Astrocyte of the cerebellum (primary cell): ENCODE measurements at regions of chr1 and their contacts with region 1.

Region 1: GRCh38 chr1:203428981-203429599 is 46.5 kb upstream of the PRELP start:
- DNase-seq: no peak
- H3K4me3 ChIP-seq: no peak overlapping the region
- CTCF ChIP-seq: no peak

Region 2: GRCh38 chr1:203368624-203369451 is 60.3 kb before region 1 on chr1:
- in situ Hi-C with region 1: loop called (anchors 5 kb)
- DNase-seq: no peak
- H3K4me3 ChIP-seq: no peak overlapping the region
- CTCF ChIP-seq: no peak

Region 3: DNA sequence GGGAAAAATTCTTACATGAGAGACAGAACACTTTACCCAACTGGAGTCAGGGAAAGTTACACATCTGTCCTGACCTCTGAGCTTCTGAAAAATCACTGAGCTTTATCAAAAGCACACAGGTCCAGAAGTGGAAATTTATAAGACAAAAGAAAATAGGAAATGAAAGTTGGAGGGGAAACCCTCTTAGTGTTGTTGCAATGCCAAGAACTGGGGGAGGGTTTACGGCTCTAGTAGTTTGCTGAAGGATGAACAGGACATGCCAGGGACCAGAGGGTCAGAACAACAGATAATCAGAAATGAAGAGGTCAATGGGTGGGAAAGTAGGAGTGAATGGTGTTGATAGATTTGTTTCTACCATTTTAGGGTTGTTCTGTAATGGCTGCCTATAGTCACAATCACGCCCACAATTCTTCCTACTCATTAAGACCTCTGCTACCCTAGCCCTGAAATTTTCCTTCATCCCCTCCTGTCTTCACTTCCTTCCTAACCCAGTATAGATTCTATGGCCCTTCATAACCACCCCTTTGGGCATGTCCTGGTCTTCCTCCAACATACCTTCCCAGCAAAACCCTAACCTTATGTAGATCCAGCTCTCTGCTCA is 47.8 kb before region 1 on chr1:
- in situ Hi-C with region 1: no loop called
- DNase-seq: no peak
- H3K4me3 ChIP-seq: no peak overlapping the region
- CTCF ChIP-seq: no peak

Region 4: DNA sequence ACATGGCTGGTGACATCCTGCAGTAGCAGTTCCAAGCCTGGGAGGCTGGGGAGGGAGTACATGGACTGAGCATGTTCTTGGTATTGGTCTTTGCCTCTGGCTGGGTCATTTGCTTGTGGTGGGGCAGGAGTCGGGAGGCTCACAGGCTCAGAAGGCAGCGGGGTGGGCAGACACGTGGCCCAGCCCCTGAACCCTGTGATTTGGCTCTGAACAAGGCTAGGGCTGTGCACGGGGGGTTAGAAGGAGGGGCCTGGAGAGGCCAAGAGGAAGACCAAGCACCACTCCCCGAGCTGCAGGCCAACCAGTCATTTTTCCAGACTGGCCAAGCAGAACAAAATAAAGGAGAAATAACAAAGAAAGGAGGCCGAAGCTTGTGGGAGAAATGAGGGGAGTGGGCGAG is 36.9 kb after region 1 on chr1:
- in situ Hi-C with region 1: loop called (anchors 5 kb)
- DNase-seq: no peak
- H3K4me3 ChIP-seq: no peak overlapping the region
- CTCF ChIP-seq: no peak